Astrocyte of the cerebellum (primary cell): ENCODE measurements at regions of chr11 and their contacts with region 1.

Region 1: DNA sequence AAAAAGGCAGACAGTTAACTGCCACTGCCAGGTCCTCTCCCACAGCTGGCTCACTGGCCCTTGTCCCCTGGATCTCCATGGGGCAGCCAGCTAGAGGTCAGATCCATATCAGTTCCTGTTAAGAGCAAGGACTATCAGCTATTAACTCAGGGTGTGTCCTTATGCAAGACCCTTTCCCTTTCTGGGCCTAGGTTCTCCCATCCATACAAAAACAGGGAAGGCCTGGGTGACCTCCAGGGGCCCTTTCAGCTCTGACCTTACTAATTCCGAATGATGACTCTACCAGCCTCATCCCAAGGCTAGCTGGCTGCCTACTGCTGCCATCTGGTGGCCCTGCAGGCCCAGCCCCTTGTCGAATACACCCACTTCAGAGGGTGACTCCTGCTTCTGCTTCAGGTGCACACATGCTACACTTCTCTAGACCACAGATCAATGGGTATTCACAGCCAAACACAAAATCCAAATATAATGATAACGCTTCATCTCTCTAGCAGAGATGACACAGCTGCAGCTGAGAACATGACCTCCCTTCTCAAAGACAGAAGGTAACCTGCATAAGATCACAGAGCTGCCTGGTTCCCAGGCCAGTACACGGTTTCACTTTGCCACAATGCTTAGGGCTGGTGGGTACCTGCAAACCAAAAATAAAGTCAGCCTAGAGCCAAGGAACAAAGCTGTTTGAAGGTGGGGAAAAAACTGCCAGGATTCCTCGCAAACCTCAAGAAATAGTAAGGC is 34.1 kb downstream of the SERGEF start:
- DNase-seq: peak; percentile 19
- H3K4me3 ChIP-seq: no peak overlapping the region
- CTCF ChIP-seq: peak; percentile 80

Region 2: DNA sequence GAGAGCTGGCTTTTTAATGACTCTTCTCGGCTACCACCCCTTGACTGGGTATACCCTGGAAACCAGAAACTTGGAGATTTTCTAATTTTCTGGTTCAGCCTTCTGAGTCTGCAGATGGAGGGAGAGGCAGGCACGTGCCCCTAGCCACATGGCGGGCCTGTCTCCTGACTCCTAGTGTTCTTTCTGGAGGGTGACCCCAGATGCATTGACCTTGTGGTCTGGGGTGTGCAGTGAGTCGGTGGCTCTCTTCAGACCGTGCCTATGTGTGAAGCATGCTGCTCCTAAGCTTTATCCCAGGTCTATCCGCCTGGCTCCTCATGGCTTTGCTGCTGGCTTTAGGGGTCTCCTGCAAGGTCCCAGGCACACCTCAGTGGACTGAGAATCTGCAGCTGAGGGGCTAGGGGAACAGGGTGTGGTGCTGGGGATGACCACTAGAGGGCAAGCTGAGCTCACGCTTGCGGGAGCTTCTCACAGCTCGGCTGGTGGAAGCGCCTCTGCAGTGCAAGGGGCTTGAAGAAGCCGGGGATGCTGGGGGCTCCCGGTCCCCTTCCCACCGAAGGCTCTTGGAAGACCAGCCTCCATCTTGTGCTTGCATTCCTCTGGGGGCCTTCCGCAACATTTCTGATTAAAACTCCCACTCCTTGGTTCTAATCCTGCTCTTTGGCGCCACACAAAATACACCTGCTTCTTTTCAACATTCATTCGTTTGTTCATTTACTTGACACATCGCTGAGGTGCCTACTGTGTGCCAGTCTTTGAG is 379.8 kb before region 1 on chr11:
- in situ Hi-C with region 1: loop called (anchors 5 kb)
- DNase-seq: peak; percentile 31
- H3K4me3 ChIP-seq: no peak overlapping the region
- CTCF ChIP-seq: peak; percentile 96

Region 3: DNA sequence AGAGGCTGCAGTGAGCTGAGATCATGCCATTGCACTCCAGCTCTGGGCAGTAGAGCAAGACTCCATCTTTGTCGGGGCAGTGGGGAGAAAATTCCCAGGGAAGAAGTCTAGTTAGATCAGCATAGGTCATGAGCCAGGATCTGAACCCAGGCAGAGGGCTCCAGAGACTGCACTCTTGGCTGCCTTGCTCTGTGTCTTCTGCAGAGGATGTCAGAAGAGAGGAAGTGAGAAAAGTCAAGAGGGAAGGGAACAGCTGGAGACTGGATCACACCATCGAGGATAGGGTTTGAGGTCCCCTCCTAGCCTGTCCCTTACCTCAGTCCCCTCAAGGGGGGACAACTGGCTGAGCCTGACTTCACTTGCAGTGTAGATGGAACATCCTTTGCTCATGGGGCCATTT is 253.5 kb before region 1 on chr11:
- in situ Hi-C with region 1: loop called (anchors 5 kb)
- DNase-seq: no peak
- H3K4me3 ChIP-seq: no peak overlapping the region
- CTCF ChIP-seq: no peak

Region 4: GRCh38 chr11:18243783-18244362 is 265.2 kb after region 1 on chr11:
- in situ Hi-C with region 1: loop called (anchors 10 kb)
- DNase-seq: peak; percentile 40
- H3K4me3 ChIP-seq: no peak overlapping the region
- CTCF ChIP-seq: peak; percentile 72

Region 5: DNA sequence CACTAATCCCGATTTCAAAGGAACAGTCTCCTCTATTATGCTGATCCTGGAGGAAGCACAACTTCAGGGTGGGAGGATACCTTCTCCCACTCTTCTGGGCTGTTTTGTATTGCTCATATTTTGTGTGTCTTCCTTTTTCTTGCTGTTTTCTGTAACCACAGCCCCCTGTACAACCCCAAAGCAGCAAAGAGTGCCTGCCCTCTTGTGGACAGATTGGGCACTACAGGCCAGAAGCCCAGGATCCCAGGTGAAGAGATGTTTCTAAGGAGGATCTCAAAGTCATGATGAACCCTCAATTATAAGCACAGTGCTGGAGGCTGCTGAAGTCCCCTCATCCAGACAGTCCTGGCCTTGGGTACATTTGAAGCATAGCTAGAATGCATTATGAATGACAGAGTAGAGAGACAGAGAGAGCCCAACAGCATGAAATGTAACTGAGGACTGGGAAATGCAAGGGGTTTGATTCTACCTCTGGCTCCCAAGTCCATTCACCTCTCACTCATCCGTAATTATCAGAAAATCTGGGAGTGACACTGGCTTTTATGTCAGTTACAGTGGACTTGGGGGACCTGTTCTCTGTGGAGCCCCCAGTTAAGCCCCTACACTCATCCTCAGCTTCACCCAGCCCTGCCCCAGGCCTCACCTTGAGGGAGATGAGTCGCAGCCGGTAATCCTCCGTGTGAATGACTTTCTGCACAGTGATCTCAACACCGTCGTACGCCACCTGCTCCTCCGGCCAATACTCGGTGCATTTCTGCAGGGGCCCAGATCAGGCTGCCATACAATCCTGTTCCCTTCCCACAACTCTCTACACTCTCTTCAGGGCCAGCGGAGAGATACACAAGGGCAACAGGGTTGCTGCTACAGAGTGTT is 753.5 kb after region 1 on chr11:
- in situ Hi-C with region 1: no loop called
- DNase-seq: no peak
- H3K4me3 ChIP-seq: no peak overlapping the region
- CTCF ChIP-seq: peak; percentile 100